ENCODE measurements at regions of chr12 and their contacts with region 1.

Region 1: DNA sequence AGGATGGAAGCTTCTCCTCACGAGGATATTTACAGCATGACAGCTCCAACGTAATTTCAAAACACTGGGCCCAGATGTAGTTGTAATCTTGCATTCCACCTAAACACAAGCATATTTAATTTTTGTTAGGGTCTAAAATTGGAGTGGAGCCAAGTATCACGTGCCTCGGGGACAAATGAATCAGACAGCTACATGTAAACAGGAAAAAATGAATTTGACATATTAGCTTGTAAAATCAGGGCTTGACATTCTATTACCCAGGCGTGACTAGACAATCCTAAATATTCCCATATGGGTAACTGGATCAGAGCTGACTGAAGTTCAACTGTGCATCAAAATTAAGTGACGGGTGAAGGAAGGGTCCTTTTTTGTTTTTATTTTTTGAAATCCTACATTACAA is 59.0 kb downstream of the MDM2 start:
- DNase-seq: no peak
- H3K4me3 ChIP-seq: no peak overlapping the region
- H3K27ac ChIP-seq: no peak overlapping the region
- H3K4me1 ChIP-seq: no peaks in the 10 kb centered on the region
- H3K27me3 ChIP-seq: no peaks in the 10 kb centered on the region
- CTCF ChIP-seq: no peak
- EP300 ChIP-seq: no peak
- POLR2A ChIP-seq: no peak

Region 2: DNA sequence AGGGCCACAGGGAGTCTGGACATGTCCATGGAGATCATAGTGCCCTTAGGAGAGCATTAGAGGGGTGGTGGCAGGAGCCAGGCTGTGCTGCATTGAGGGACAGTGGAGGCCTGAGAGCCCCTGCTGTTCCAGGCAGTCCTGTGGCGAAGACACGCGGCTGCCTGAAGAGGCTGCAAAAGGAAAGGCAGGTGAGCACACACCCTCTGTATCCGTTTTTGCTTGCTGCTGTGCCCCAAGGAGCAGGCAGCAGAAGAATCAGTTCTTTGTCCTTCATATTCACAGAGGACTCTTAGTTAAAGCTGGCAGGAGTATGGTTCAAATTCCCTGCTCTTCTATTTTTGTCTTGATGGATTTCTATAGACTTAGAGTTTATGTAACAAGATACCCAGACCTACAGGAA is 116.4 kb before region 1 on chr12:
- intact Hi-C with region 1: no loop called
- DNase-seq: no peak
- H3K4me3 ChIP-seq: no peak overlapping the region
- H3K27ac ChIP-seq: no peak overlapping the region
- H3K4me1 ChIP-seq: peaks cover 9 to 34% (median 19%) of the 10 kb centered on the region in 4 donors
- H3K27me3 ChIP-seq: no peaks in the 10 kb centered on the region
- CTCF ChIP-seq: no peak
- EP300 ChIP-seq: no peak
- POLR2A ChIP-seq: no peak

Region 3: DNA sequence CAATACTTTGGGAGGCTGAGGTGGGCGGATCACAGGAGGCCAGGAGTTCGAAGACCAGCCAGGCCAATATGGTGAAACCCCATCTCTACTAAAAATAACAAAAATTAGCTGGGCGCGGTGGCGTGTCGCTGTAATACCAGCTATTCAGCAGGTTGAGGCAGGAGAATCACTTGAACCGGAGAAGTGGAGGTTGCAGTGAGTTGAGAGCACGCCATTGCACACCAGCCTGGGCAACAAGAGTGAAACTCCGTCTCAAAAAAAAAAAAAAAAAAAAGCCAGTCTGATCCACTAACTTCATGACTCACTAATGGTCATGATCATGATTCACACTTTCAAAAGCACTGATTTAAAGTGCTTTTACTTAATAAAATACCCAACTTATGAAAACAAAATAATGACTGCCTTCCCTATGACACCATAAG is 104.4 kb after region 1 on chr12:
- intact Hi-C with region 1: no loop called
- DNase-seq: no peak
- H3K4me3 ChIP-seq: no peak overlapping the region
- H3K27ac ChIP-seq: no peak overlapping the region
- H3K4me1 ChIP-seq: no peaks in the 10 kb centered on the region
- H3K27me3 ChIP-seq: no peaks in the 10 kb centered on the region
- CTCF ChIP-seq: no peak
- EP300 ChIP-seq: no peak
- POLR2A ChIP-seq: no peak

Region 4: DNA sequence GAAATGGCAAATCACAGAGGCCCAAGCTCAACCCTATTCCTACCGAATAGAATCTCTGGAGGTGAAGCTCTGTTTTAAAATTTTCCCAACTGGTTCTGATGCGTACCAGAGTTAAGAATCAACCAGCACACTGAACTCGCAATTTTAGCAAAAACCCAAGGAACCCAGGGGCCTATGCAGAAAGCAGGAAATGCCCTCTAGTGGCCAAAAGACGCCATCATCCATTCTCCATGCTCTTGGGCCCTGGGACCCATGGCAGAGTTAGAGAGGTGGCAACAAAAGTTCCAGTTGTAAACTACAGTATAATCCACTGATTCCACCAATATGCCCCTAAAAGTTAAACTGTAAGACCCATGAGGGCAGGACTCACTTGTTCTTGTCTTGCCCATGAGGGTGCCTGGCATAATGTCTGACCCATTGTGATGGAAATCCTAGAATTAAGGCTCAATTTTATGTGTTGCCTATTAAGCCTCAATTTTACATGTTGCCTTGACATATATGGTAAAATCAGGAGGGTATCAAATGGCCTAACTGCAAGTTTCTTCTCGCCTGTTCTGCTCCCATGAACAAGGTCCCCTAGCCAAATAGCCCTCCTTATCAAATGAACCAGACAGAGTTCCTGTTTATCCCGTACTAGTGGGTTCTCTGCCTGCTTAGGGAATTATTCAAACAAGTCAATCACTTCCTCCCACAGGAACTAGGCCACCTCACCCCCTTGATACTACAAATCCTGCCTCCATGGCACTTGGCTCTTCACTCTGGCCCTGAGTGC is 203.6 kb after region 1 on chr12:
- intact Hi-C with region 1: loop called (anchors 5 kb)
- DNase-seq: no peak
- H3K4me3 ChIP-seq: no peak overlapping the region
- H3K27ac ChIP-seq: no peak overlapping the region
- H3K4me1 ChIP-seq: no peaks in the 10 kb centered on the region
- H3K27me3 ChIP-seq: no peaks in the 10 kb centered on the region
- CTCF ChIP-seq: peak; percentile 75 to 92 (median 80)
- EP300 ChIP-seq: no peak
- POLR2A ChIP-seq: no peak